ENCODE measurements at regions of chr15 and their contacts with region 1.

Region 1: DNA sequence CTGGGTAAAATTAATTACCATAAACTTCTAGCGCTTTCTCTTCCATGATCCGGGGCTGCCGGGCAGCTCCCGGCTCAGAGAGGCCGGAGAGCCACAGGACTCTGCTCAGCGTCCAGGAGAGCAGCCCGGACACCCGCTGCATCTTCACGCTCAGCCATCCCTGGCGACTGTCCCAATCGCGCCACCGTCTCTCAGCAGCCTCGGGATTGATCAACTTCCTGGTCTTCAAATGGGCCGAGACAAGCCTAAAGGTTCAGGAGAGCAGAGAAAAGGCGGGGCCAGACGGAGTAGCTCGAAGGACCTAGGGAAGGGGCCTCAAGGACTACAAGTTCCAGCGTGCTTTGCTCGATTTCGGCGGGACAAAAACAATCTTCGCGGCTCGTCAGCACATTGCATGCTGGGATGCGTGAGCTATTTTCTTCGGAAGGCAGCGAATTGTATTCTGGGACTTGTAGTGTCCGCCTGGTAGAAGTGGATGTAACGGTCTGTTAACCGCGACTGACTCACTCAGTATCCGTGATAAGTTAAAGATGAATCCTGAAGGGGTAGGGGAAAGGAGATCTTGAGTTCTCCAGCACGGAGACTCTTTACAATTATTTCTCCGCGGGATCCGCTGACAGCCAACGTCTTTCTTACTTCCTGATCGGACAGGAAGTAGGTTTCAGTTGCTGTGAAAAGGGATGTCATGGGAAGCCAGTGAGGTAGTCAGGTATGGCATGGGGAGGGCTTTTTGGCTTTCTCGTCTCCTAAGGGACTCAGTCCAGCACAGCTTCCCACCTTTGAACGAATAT is at the start of gene CIAO2A:
- DNase-seq: peak; percentile 94 to 98
- H3K4me3 ChIP-seq: peak within 1 kb of the TSS; percentile 74
- H3K4me3 Mint-ChIP-seq: peak within 1 kb of the TSS; percentile 99
- H3K27ac Mint-ChIP-seq: peak within 1 kb of the TSS; percentile 99
- H3K4me1 ChIP-seq: peaks cover 18% of the 10 kb centered on the region
- H3K4me1 Mint-ChIP-seq: peaks cover 18% of the 10 kb centered on the region
- H3K27me3 ChIP-seq: no peaks in the 10 kb centered on the region
- H3K27me3 Mint-ChIP-seq: no peaks in the 10 kb centered on the region
- CTCF ChIP-seq: no peak
- total RNA-seq, gene CIAO2A: 61.6 and 63.7 TPM in 2 replicates

Region 2: GRCh38 chr15:64110950-64111678 is 17.3 kb after region 1 on chr15:
- CTCF ChIA-PET with region 1: interaction called, 4 read pairs
- POLR2A ChIA-PET with region 1: no interaction called
- intact Hi-C with region 1: loop called (anchors 2 kb)
- DNase-seq: no peak
- H3K4me3 ChIP-seq: no peak overlapping the region
- H3K4me3 Mint-ChIP-seq: no peak overlapping the region
- H3K27ac Mint-ChIP-seq: no peak overlapping the region
- H3K4me1 ChIP-seq: peaks cover 11% of the 10 kb centered on the region
- H3K4me1 Mint-ChIP-seq: peaks cover 7% of the 10 kb centered on the region
- H3K27me3 ChIP-seq: no peaks in the 10 kb centered on the region
- H3K27me3 Mint-ChIP-seq: no peaks in the 10 kb centered on the region
- CTCF ChIP-seq: no peak

Region 3: DNA sequence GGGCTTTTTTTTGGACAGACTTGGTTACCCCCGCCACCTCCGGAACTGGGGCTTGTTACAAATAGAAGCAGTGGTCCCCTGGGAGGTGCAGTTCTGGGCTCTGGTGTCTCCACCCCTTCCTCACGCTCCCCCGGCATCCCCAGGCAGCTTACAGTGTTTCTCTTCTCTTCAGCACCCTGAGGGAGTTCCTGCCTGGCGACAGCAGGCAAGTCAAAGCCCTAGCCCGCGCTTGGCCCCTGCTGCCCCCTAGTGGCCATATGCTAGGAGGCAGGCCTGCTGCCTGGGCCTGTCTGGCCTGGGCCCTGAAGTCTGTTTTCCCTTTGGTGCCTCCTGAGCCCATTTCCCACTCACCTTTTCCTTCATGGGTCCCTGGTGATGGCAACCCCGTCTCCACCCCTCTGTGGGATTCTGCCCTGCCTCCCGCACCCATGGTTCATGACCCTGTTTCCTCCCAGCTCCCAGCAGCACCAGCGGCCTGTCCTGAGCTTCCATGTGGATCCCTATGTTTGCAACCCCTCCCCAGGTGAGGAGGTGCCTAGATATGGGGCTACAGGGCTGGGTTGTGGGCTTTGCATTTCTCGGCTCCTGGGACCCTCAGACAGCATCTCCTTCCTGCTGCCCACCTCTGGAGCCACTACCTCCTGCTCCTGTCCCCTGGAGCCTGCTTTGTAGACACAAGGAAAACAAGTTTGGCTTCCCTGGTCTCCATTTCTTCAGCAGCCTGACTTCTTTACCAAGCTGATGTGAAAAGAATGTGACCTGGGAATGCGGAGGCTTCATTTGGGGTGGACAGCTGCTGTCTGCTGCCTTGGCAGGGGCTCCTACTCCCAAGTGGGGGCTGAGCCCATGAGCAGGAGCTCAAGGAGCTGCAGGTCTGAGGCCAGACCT is 59.9 kb after region 1 on chr15:
- CTCF ChIA-PET with region 1: interaction called, 11 read pairs
- POLR2A ChIA-PET with region 1: interaction called, 3 read pairs
- intact Hi-C with region 1: loop called (anchors 2 kb)
- DNase-seq: peak; percentile 85 to 94
- H3K4me3 ChIP-seq: no peak overlapping the region
- H3K4me3 Mint-ChIP-seq: peak overlapping the region; percentile 53
- H3K27ac Mint-ChIP-seq: no peak overlapping the region
- H3K4me1 ChIP-seq: peaks cover 5% of the 10 kb centered on the region; the same call in 1 of the 2 replicates
- H3K4me1 Mint-ChIP-seq: peaks cover 9% of the 10 kb centered on the region
- H3K27me3 ChIP-seq: no peaks in the 10 kb centered on the region
- H3K27me3 Mint-ChIP-seq: no peaks in the 10 kb centered on the region
- CTCF ChIP-seq: peak; percentile 92 to 95